AG04450 (cell line): ENCODE measurements at regions of chr2 and their contacts with region 1.

Region 1: DNA sequence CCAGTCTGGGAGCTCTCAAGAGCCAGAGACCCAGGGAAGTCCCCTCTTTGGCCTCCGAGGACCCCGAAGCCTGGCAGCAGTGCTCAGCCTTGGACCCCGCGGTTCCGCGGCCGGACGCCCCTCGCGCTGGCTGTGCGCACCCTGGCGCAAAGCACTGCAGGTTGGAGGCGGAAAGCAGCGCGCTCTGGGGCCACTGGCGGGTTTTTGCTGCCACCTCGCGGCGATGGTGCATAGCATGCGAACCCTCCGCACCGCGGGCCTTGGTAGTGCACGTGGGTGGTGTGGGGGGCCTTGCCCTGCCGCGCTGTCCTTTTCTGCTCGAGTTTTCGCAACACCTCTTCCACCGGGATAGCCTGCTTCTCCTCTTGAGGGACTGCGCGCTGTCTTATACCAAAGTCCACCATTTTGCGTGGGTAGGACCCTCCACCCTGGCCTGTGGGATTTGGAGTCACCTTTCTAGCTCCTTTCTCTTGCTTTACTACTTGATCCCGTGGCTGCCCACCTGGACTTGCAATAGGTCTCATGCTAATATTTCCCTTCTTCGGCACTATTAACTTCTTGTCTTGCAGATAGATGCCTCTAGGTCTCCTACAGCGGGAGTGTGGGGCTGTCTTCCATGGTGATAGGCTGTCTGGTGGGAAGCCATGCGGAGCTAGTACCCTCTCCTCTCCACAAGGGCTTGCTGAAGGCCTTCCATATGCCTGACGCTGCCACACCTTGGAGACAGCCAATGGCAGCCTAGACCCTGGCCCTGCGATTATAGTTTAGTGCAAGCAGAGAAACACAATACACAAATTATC is 14.3 kb downstream of the SIX3 start:
- DNase-seq: peak; percentile 18
- H3K4me3 ChIP-seq: 0 out of 2 replicates have a peak overlapping the region, but pooled peaks have one; percentile 4
- H3K27ac ChIP-seq: no peak overlapping the region
- H3K27me3 ChIP-seq: peaks cover 53% of the 10 kb centered on the region
- CTCF ChIP-seq: peak; percentile 85

Region 2: DNA sequence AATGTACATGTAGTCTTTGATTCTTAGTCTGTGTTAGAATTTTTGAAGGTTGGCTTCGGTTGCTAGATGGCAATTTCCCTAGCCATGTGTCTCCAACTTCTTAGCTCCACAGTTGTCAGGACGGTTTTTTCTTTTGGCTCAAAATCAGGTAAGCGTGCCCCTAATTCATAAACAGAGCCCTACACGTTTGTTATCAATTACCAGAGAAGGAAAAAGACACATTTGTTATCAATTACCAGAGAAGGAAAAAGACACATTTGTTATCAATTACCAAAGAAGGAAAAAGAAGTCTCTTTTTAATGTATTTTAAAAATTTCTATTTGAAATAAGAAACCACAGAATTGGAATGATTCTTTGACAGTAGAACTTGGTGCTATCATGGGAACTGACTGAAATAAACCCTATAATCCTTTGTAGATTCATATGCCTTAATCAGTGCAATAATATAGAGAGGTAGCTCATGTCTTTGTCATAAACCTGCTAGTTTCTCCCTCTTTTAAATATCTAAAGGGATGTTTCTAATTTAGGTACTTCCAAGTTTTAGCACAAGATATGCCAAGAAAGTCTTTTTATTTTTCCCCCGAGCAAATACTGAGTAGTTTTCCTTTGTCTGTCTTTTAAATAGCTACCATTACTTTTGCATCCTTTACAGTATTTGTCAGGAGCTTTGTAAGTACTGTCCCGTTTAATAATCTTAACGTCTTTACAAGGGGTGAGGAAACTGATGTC is 558.2 kb before region 1 on chr2:
- CTCF ChIA-PET with region 1: interaction called, 72 read pairs
- POLR2A ChIA-PET with region 1: no interaction called
- DNase-seq: no peak
- H3K4me3 ChIP-seq: no peak overlapping the region
- H3K27ac ChIP-seq: no peak overlapping the region
- H3K27me3 ChIP-seq: no peaks in the 10 kb centered on the region
- CTCF ChIP-seq: no peak